ENCODE measurements at regions of chr7 and their contacts with region 1.

Region 1: DNA sequence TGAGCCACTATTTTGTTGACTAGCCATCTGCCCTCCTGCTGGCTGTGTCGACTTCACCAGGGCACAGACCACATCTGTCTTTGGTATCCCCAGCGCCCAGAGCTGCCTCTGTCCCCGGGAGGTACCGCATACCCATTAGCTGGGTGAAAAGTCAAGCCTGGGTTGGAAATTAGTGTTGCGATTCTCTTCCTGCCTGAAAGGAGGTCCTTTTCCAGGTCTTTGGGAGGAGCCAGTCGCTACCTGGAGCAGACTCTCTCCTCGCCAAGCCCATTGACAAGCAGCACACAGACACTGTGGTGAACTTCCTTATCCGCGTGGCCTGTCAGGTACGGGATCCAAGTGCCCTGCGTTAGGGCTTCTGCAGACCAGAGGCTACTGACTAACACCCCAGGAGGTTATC is 79.4 kb downstream of the TRRAP start:
- DNase-seq: no peak
- H3K4me3 Mint-ChIP-seq: no peak overlapping the region
- H3K27ac Mint-ChIP-seq: no peak overlapping the region
- H3K4me1 Mint-ChIP-seq: no peaks in the 10 kb centered on the region
- H3K27me3 Mint-ChIP-seq: no peaks in the 10 kb centered on the region

Region 2: GRCh38 chr7:98917331-98917730 is 40.4 kb before region 1 on chr7:
- intact Hi-C with region 1: loop called (anchors 2 kb)
- DNase-seq: no peak
- H3K4me3 Mint-ChIP-seq: no peak overlapping the region
- H3K27ac Mint-ChIP-seq: no peak overlapping the region
- H3K4me1 Mint-ChIP-seq: no peaks in the 10 kb centered on the region
- H3K27me3 Mint-ChIP-seq: no peaks in the 10 kb centered on the region

Measured in activated T-helper 2 cell treated with anti-CD3 and anti-CD28 coated beads, Interferon-gamma antibody, Interleukin-2, Interleukin-4, amounts not matched to agents 10 μg/mL and 5 μg/mL and 100 μg/mL, durations not matched to agents 14 hours and 24 hours and 36 hours (primary cell).